ENCODE measurements at regions of chr11 and their contacts with region 1.

Region 1: DNA sequence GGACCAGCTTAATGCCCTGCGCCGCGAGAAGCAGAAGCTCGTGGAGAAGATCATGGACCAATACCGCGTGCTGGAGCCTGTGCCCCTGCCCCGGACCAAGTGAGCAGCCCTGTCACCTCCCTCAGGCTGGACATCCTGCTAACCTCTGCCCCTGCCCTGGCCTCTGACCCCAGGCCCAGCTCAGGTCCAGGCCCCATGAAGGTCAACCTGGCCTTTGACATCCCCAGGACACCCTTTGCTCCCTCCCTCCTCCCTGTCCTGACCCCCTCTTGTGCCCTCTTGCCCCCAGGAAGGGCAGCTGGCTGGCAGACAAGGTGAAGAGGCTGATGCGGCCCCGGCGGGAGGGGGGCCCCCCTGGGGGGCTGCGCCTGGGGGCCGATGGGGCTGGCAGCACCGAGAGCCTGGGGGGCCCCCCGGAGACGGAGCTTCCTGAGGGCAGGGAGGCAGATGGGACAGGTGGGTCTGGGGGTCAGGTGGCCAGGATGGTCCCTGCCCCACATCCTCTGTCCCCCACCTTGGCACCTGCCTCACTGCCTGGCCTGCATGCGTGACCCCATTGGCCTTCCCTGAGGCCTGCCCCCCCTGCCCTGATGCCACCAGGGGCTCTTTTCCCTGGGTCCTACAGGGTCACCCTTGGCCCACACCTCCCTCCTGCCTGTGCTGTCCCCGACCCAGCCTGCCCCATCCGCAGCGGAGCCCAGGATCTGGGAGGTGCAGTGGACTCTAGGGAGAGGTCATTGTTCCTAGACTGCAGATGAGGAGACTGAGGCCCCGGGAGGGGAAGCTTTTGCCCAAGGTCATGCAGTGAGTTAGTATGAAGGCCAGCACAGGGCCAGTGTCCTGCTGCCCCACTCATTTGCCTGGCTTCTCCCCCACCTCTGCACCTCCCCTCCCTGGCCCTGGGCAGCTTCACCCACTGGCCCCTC is 5.0 kb upstream of the RPS6KA4 start:
- DNase-seq: no peak
- H3K4me3 ChIP-seq: no peak overlapping the region
- H3K27ac ChIP-seq: no peak overlapping the region
- H3K4me1 ChIP-seq: peaks cover 6% of the 10 kb centered on the region
- H3K27me3 ChIP-seq: no peaks in the 10 kb centered on the region
- CTCF ChIP-seq: no peak
- POLR2A ChIP-seq: no peak

Region 2: DNA sequence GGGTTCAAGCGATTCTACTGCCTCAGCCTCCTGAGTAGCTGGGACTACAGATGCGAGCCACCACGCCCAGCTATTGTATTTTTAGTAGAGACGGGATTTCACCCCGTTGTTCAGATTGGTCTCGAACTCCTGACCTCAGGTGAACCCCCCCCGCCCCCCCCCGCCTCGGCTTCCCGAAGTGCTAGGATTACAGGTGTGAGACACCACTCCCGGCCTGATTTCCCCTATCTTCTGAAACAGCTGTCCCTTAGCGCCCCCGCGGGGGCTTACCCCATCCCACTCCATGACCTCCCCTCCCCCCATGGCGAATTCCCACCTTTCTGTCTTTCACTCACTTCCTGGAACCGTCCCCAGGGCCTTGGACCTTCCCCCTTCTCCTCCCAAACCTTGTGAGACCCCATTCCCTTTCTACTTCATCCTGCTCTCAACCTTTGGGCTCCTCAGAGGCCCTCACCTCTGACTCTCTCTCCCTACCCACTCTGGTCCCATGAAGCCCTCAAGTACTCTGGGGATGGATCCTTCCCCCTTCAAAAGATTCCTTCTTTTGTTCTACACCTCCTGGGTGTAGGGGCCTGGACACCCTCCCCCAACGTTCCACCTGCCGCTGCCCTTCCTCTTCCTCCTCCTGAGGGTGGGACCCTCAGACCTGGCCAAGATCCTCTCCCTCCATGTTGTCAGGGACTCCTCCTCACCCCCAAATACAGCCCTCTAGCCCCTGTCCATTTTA is 35.1 kb before region 1 on chr11:
- intact Hi-C with region 1: loop called (anchors 1 kb)
- DNase-seq: no peak
- H3K4me3 ChIP-seq: peak overlapping the region; percentile 80 to 81
- H3K27ac ChIP-seq: peak overlapping the region; percentile 98
- H3K4me1 ChIP-seq: no peaks in the 10 kb centered on the region
- H3K27me3 ChIP-seq: no peaks in the 10 kb centered on the region
- CTCF ChIP-seq: no peak
- POLR2A ChIP-seq: no peak

Region 3: DNA sequence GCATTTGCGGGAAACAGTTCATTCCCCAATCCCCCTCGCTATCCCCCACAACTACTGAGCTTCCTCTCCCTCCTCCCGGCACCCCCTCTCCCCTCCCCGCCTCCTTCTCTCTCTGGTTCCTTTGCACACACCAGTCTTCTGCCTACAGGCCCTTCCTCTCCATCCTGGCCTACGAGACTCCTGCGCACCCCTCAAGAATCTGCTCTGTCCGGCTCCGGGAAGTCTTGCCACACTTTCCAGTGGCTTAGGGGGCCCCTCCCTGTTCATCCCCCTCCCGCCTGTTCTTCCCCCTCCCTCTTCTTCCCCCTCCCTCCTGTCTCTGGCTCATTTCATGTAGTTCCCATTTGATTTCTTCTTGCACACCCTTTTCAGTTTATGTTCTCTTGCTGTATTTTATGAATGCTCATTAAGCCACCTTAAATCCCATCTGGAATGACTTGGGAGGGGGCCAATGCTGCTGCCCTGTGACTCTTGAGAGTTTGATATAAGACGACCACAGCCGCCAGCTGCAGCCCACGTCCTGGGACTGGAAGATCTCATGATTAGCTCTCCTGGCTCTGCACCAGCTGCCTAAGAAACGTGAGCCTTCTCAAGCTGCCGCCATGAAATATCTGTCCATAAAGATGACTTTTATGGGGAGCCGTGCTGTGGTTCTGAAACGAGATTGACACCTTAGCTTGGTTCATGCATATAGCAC is 55.9 kb after region 1 on chr11:
- intact Hi-C with region 1: no loop called
- DNase-seq: no peak
- H3K4me3 ChIP-seq: no peak overlapping the region
- H3K27ac ChIP-seq: no peak overlapping the region
- H3K4me1 ChIP-seq: no peaks in the 10 kb centered on the region
- H3K27me3 ChIP-seq: no peaks in the 10 kb centered on the region
- CTCF ChIP-seq: no peak
- POLR2A ChIP-seq: no peak